ENCODE measurements at regions of chr22 and their contacts with region 1.

Region 1: DNA sequence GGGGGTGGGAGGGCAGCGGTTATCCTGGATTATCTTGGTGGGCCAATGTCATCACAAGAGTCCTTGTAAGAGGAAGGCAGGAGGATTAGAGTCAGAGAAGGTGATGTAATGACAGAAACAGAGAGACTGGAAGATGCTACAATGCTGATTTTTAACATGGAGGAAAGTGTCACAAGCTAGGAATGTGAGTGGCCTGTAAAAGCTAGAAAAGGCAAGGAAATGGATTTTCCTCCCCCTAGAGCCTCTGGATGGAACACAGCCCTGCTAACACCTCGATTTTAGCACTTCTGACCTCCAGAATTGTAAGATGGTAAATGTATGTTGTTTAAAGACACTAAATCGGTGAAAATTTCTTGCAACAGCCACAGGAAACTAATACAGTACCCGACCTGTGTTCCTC is 109.3 kb downstream of the MN1 start:
- DNase-seq: no peak
- H3K4me3 ChIP-seq: no peak overlapping the region
- H3K27ac ChIP-seq: no peak overlapping the region
- H3K4me1 ChIP-seq: no peaks in the 10 kb centered on the region
- H3K27me3 ChIP-seq: no peaks in the 10 kb centered on the region
- CTCF ChIP-seq: no peak

Region 2: DNA sequence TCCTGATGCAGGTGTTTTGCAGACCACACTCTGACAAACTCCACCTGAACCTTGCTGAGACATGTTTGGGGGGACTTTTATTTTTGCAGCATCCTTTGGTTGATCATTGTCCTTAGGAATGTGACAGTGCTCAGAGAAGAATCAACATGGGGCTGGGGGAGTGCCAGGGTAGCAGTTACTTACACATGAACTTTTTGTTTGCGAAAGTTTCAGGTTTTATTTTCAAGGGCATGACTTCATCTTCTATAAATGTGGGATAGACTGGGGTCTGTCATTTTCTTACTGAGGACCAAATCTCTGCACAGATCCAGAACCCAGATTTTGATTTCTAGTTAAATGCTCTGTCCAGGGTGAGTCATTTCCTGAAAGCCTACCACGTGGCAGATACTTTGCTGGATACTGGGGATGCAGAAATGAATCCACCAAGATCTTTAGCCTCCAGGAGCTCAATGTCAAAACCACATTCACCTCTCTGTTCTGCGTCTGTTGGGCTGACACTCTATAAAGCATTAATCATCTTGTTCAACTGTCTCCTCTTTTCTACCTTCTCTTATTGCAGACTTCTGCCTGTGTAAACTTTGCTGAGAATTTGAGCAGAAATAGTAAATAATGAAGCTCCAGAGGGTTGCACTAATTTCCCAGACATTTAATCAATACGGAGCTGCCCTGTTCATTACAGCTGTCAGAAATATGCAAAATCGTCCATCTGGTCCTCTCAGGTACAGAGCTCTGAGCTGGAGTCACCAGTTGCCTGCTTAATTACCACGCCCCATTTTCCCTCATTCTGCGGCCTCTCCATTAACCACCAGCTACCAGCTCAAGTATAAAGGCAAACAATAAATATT is 646.9 kb before region 1 on chr22:
- CTCF ChIA-PET with region 1: no interaction called
- dilution Hi-C with region 1: loop called (anchors 10 kb)
- in situ Hi-C with region 1: no loop called
- intact Hi-C with region 1: no loop called
- DNase-seq: peak; percentile 69
- H3K4me3 ChIP-seq: no peak overlapping the region
- H3K27ac ChIP-seq: no peak overlapping the region
- H3K4me1 ChIP-seq: peaks cover 6% of the 10 kb centered on the region
- H3K27me3 ChIP-seq: no peaks in the 10 kb centered on the region
- CTCF ChIP-seq: no peak